ENCODE measurements at regions of chr22 and their contacts with region 1.

Region 1: GRCh38 chr22:35128637-35129036 is 62.7 kb downstream of the ISX start:
- DNase-seq: no peak
- ATAC-seq: no peak
- H3K4me3 ChIP-seq: no peak overlapping the region
- H3K27ac ChIP-seq: no peak overlapping the region
- H3K4me1 ChIP-seq: no peaks in the 10 kb centered on the region
- H3K27me3 ChIP-seq: no peaks in the 10 kb centered on the region
- CTCF ChIP-seq: no peak
- POLR2A ChIP-seq: no peak
- RAD21 ChIP-seq: no peak

Region 2: GRCh38 chr22:34934261-34934660 is 194.4 kb before region 1 on chr22:
- CTCF ChIA-PET with region 1: no interaction called
- POLR2A ChIA-PET with region 1: no interaction called
- RAD21 ChIA-PET with region 1: no interaction called
- intact Hi-C with region 1: loop called (anchors 5 kb)
- DNase-seq: no peak
- ATAC-seq: no peak
- H3K4me3 ChIP-seq: no peak overlapping the region
- H3K27ac ChIP-seq: no peak overlapping the region
- H3K4me1 ChIP-seq: no peaks in the 10 kb centered on the region
- H3K27me3 ChIP-seq: peaks cover 11% of the 10 kb centered on the region; the same call in 1 of the 2 replicates
- CTCF ChIP-seq: no peak
- POLR2A ChIP-seq: no peak
- RAD21 ChIP-seq: no peak

Region 3: DNA sequence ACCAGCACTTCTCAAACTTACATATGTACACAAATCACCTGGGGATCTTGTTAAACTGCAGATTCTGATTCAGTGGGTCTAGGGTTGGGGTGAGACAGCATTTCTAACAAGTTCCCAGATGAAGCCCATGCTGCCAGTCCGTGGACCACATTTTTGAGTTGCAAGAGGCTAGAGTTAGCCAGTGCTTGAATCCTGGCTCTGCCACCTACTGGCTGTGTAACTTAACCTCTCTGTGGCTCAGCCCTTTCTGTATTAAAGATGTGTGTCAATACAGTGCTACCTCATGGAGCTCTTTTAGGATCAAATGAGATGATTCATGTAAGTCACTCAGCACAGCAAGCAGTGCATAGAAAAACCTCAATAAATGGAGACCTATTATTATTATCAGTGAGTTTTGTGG is 152.9 kb before region 1 on chr22:
- CTCF ChIA-PET with region 1: no interaction called
- POLR2A ChIA-PET with region 1: no interaction called
- RAD21 ChIA-PET with region 1: no interaction called
- intact Hi-C with region 1: no loop called
- DNase-seq: no peak
- ATAC-seq: peak; percentile 75
- H3K4me3 ChIP-seq: no peak overlapping the region
- H3K27ac ChIP-seq: no peak overlapping the region
- H3K4me1 ChIP-seq: no peaks in the 10 kb centered on the region
- H3K27me3 ChIP-seq: peaks cover 3% of the 10 kb centered on the region; the same call in 1 of the 2 replicates
- CTCF ChIP-seq: peak in 2 of 3 experiments; percentile 39 to 42; a peak in 4 of 6 replicates
- POLR2A ChIP-seq: no peak
- RAD21 ChIP-seq: peak; percentile 9; the same call in 1 of the 2 replicates

Region 4: DNA sequence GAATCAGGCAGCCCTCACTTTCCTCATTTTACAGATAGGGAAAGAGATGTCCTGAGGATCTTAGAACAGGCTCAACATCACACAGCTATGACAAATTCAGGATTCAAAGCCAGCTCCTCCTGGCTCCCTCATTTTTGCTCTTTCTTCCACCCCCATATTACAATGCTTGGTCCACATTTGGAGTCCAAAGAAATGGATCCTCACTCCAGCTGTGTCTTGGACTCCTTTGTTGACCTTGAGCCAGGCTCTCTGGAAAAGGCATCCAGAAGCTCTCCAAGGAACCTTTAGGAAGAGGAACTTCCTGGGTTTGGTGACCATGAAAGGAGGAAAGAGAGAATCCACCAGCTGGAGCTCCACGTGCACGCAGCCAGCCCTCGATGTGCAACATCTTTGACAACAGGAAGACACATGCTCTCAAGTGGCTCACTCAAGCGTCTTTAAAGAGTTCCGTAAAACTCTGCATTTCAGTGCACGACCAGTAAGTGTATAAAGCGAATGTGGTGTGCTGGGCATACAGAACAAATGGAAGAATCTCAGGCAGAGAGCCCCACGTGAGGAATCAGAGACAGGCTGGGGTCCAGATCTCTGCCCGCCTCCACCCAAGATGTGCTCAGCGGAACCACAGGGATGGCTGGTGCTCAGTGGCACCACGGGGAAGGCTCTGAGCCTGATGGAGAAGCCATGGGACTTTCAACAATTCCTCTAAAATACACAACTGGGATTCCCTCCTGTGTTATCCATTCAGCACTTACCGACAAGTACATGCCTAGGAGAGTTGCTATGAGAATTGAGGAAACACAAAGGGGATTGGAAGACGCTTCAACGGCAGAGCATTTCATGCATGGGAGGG is 14.3 kb before region 1 on chr22:
- CTCF ChIA-PET with region 1: no interaction called
- POLR2A ChIA-PET with region 1: no interaction called
- RAD21 ChIA-PET with region 1: no interaction called
- intact Hi-C with region 1: no loop called
- DNase-seq: no peak
- ATAC-seq: no peak
- H3K4me3 ChIP-seq: no peak overlapping the region
- H3K27ac ChIP-seq: no peak overlapping the region
- H3K4me1 ChIP-seq: no peaks in the 10 kb centered on the region
- H3K27me3 ChIP-seq: no peaks in the 10 kb centered on the region
- CTCF ChIP-seq: no peak
- POLR2A ChIP-seq: no peak
- RAD21 ChIP-seq: no peak

Region 5: DNA sequence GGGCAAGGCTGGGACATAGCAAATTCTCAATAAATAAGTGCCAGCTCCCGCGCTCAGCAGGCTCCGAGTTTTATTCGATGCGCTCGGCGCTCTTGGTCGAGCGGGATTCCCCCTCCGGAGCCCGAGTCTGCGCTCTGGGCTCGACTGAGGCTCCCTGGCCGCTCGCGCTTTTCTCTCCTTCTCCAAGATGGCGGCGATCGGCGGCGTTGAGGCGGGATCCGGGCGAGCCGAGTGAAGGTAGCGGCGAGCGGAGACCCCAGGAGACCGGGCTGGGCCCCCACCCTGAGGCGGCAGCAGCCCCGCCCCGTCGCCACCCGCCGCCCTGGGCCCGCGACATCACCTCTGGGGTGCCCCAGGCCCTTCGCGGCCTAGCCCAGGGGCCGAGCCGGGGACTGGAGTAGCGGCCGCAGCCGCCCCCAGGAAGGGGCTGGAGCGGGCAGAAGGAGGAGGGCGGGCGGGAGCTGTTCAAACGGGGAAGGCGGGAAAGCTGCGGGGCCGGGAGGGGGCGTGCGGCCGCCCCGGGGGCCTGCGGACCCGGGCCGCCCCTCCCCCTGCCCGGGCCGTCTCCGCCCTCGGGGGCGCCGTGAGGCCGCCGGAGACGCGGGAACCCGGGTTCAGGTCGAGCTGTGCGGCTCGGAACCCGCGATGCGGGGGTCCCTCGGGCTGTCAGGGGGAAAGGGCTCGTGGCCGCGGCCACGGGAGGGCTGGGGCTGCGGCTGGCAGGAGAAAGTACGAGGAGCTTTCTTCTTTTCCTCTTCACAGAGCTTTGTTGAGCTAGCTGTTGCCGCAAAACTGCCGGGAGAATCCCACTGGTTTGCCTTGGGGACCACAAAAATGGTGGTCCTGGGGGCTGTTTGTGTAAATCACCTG is 128.9 kb after region 1 on chr22 and contains the start of gene HMGXB4:
- CTCF ChIA-PET with region 1: no interaction called
- POLR2A ChIA-PET with region 1: no interaction called
- RAD21 ChIA-PET with region 1: no interaction called
- intact Hi-C with region 1: no loop called
- DNase-seq: peak; percentile 71
- ATAC-seq: peak; percentile 91
- H3K4me3 ChIP-seq: peak within 1 kb of the TSS; percentile 69 to 87
- H3K27ac ChIP-seq: peak within 1 kb of the TSS; percentile 84
- H3K4me1 ChIP-seq: peaks cover 9 to 16% of the 10 kb centered on the region in 2 experiments; a peak in 3 of 4 replicates
- H3K27me3 ChIP-seq: no peaks in the 10 kb centered on the region
- CTCF ChIP-seq: no peak
- POLR2A ChIP-seq: peak; percentile 50
- RAD21 ChIP-seq: no peak
- total RNA-seq, gene HMGXB4: 36.7 TPM